ENCODE measurements at regions of chr7 and their contacts with region 1.

Region 1: GRCh38 chr7:82810558-82811259 is 352.0 kb downstream of the PCLO start:
- DNase-seq: peak; percentile 65
- H3K4me3 ChIP-seq: no peak overlapping the region
- H3K27ac ChIP-seq: no peak overlapping the region
- H3K4me1 ChIP-seq: no peaks in the 10 kb centered on the region
- CTCF ChIP-seq: peak; percentile 91

Region 2: GRCh38 chr7:82521906-82522445 is 288.7 kb before region 1 on chr7:
- CTCF ChIA-PET with region 1: no interaction called
- POLR2A ChIA-PET with region 1: no interaction called
- intact Hi-C with region 1: no loop called
- DNase-seq: no peak
- H3K4me3 ChIP-seq: no peak overlapping the region
- H3K27ac ChIP-seq: no peak overlapping the region
- H3K4me1 ChIP-seq: no peaks in the 10 kb centered on the region
- CTCF ChIP-seq: no peak

Region 3: DNA sequence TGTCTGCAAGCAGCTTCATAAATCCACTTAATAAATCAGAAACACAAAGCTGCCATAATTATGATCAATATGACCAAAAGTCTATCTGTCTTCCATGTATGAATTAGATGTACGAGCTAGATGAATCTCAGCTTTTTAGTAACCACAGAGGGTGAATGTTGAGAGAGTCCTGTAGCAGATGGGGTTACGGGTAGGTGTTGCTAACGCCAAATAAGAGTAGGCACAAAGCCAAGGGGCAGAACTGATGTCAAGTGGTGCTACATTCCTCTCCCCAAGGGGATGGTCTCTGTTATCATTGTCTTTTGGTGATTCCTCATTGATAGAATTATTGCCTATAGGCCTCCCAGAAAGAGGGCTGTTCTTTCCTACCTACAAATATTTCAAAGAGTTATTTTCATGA is 94.2 kb after region 1 on chr7:
- CTCF ChIA-PET with region 1: no interaction called
- POLR2A ChIA-PET with region 1: interaction called, 3 read pairs
- intact Hi-C with region 1: loop called (anchors 5 kb)
- DNase-seq: no peak
- H3K4me3 ChIP-seq: no peak overlapping the region
- H3K27ac ChIP-seq: no peak overlapping the region
- H3K4me1 ChIP-seq: no peaks in the 10 kb centered on the region
- CTCF ChIP-seq: no peak

Region 4: DNA sequence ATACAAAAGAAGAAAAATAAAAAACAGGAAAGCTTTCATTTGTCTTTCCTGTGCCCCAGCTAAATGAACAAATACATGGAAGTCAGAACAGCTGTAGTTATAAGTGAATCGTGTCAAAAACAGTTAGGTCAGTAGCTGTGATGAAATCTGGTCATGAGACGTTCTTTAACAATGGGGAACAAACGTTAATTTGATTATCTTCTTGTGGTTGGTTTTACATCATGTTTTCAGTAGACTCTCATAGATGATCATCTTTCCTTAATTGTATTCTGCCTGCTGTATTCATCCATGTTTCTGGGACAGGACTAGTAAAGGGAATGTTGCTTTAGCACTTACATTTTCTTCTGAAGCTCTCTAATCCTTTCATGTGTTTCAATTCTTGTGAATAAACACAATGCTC is 255.0 kb after region 1 on chr7:
- CTCF ChIA-PET with region 1: no interaction called
- POLR2A ChIA-PET with region 1: no interaction called
- intact Hi-C with region 1: loop called (anchors 2 kb)
- DNase-seq: no peak
- H3K4me3 ChIP-seq: no peak overlapping the region
- H3K27ac ChIP-seq: no peak overlapping the region
- H3K4me1 ChIP-seq: no peaks in the 10 kb centered on the region
- CTCF ChIP-seq: no peak

Region 5: DNA sequence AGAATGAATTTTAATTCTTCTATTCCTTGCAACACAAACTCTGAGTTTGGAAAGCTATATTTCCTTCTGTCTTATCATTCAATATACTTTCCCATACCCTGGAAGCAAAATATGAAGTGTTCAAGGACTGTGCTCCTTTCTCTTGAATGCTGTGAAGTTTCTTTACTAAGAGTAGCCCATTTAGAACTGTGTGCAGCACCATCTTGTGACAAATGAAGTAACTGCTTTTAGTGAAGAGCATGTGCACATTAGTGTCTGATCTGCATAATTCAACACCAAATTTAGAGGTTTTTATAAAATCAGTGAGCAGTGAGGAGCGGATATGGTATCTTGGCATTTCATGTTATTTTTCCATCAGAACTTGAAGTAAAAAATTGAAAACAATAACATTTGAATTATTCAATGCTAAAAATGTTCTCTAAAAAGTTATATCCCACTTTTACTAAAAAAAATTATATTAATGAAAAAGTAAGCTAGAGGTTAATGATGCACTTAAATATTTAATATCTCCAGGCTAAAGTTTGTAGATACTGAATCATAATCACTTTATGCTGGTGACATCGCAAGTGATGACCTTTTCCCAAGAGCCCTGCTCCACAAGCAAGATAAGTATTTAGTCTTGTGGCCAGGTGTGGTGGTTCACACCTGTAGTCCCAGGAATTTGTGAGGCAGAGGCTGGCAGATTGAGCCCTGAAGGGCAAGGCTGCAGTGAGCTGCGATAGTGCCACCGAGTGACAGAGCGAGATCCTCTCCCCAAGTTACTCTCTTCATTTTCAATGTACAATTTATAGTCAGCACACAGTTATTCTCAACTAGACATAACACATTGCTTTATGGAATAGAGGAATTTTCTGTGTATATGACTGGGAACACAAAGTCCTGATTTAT is 460.7 kb after region 1 on chr7:
- CTCF ChIA-PET with region 1: no interaction called
- POLR2A ChIA-PET with region 1: interaction called, 3 read pairs
- intact Hi-C with region 1: loop called (anchors 5 kb)
- DNase-seq: peak; percentile 24
- H3K4me3 ChIP-seq: no peak overlapping the region
- H3K27ac ChIP-seq: no peak overlapping the region
- H3K4me1 ChIP-seq: no peaks in the 10 kb centered on the region
- CTCF ChIP-seq: peak; percentile 68